ENCODE measurements at regions of chr10 and their contacts with region 1.

Region 1: DNA sequence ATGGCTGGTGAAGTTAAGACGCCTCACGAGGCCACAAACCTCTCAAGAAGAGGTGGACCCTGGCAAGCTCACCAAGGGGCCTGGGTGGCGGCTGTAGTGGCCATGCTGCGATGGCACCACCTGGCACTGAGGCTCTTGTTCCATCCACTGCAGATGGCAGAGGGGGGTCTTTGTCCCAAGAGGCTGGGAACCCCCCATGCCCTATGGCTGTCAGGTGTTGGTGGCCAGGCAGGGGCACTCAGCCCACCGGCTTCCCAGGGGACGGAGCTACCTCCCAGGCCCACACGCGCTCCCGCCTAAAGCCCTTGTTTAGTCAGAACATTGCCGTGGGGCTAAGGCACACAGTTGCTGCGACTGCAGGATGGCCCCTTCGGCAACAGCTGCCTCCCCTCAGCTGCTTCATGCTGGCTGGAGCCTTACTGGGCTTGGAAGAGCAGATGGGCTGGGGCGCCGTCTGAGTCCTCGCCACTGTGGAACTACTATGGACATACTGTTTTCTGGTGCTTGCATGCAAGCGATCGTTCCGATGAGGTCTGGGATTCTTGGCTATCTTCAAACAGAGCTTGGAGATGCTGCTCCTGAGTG is 46.8 kb downstream of the DPYSL4 start:
- DNase-seq: no peak
- ATAC-seq: no peak
- H3K4me3 ChIP-seq: no peak overlapping the region
- H3K4me3 Mint-ChIP-seq: no peak overlapping the region
- H3K27ac ChIP-seq: no peak overlapping the region
- H3K27ac Mint-ChIP-seq: no peak overlapping the region
- H3K4me1 ChIP-seq: peaks cover 39% of the 10 kb centered on the region
- H3K4me1 Mint-ChIP-seq: peaks cover 32% of the 10 kb centered on the region
- H3K27me3 ChIP-seq: peaks cover 0 to 2% of the 10 kb centered on the region in 2 experiments
- H3K27me3 Mint-ChIP-seq: no peaks in the 10 kb centered on the region
- CTCF ChIP-seq: no peak

Region 2: GRCh38 chr10:132302421-132303290 is 69.1 kb after region 1 on chr10:
- CTCF ChIA-PET with region 1: no interaction called
- POLR2A ChIA-PET with region 1: no interaction called
- intact Hi-C with region 1: loop called in 1 of 2 experiments (anchors 1 kb)
- DNase-seq: no peak
- ATAC-seq: no peak
- H3K4me3 ChIP-seq: no peak overlapping the region
- H3K4me3 Mint-ChIP-seq: no peak overlapping the region
- H3K27ac ChIP-seq: no peak overlapping the region
- H3K27ac Mint-ChIP-seq: no peak overlapping the region
- H3K4me1 ChIP-seq: peaks cover 14% of the 10 kb centered on the region
- H3K4me1 Mint-ChIP-seq: peaks cover 17% of the 10 kb centered on the region
- H3K27me3 ChIP-seq: no peaks in the 10 kb centered on the region
- H3K27me3 Mint-ChIP-seq: no peaks in the 10 kb centered on the region
- CTCF ChIP-seq: no peak